Naive thymus-derived CD4-positive, alpha-beta T cell (primary cell): ENCODE measurements at regions of chr10 and their contacts with region 1.

Region 1: DNA sequence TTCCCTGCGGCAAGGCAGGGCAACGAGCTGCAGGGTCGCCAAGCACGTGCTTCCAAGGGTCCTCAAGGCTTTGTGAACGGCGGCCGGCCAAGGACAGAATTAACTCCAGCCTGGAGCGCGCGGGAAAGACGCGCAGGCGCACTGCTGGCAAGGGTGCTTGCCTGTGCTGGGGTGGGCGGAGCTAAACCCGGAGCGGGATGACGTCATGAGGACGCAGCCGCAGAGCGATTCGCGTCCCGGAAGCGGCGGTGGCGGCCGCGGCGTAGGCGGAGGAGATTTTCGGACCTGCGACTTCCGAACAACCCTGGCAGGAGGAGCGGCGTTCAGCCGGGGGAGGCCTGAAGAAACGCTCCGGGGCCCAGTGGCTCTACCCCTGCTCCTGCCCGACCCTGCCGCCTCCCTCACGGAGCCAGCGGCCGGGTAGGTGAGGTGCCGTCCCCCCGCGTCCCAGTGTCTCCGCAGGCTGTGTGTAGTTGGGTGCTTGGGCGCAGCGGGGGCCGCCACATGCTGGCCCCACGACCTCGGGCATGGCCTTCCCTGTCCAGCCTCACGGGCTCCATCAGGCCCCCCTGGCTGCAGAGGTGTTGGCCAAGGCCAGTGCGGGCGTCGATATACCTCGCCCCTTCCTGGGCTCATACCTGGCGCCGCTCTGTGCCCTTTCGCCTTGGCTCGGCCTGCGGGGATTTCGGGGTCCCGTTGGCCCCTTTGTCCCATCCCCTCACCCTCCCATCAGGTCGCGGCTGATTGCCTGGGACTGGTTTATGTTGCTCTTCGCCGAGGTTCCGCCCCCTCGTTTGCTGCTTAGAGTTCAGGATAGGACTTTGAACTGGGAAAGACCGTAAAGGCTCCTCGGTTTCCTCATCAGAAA is at the start of gene ZFYVE27:
- DNase-seq: peak; percentile 88 to 99 (median 94)
- ATAC-seq: peak; percentile 96
- H3K4me3 ChIP-seq: peak within 1 kb of the TSS; percentile 86
- H3K4me3 Mint-ChIP-seq: peak within 1 kb of the TSS; percentile 88 to 98 (median 94)
- H3K27ac ChIP-seq: peak within 1 kb of the TSS; percentile 99
- H3K27ac Mint-ChIP-seq: peak within 1 kb of the TSS; percentile 95 to 99 (median 97)
- H3K4me1 ChIP-seq: peaks cover 18% of the 10 kb centered on the region in 2 donors
- H3K4me1 Mint-ChIP-seq: peaks cover 20 to 62% (median 58%) of the 10 kb centered on the region in 7 donors
- H3K27me3 ChIP-seq: no peaks in the 10 kb centered on the region
- H3K27me3 Mint-ChIP-seq: peaks cover 0 to 3% (median 0%) of the 10 kb centered on the region in 5 donors
- total RNA-seq, gene ZFYVE27: 31.0 to 68.8 (median 61.8) TPM

Region 2: DNA sequence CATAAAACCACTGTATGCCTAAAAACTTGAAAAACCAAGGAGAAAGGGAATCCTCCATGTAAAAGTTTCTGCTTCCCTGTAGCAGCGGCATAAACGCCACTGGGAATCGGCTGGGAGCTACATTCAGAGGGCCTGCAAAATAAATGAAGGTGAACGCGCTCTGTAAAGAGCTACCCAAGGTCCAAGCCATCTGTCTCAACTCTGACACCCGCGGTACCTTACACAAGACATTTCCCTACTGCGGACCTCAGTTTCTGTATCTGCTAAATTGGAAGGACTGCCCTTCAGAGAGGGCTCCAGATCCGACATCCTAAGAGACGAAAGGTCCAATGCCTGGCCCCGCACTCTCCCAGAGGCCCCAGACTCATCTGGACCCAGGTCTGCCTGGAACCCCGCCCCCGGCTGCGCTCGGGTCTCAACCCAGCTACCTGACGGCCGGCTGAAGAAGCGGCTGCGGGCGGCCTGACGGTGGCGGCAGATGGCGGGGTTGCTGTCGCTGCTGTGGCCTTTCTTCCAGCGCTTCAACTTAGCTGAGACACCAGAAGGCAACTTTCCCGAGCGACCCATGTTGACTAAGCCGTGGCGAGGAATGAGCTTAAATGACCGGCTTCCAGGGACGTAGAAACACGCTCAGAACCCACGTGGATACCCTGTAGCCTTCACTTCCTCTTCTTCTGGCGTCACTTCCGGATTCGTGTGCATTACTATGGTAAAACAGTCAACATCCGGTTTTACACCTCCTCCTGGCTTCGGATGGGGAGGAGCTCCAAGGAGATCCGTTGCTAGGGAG is 336.3 kb before region 1 on chr10 and contains the start of gene RRP12:
- CTCF ChIA-PET with region 1: no interaction called
- POLR2A ChIA-PET with region 1: no interaction called
- intact Hi-C with region 1: loop called in 1 of 2 experiments (anchors 2 kb)
- DNase-seq: peak; percentile 47 to 96 (median 92)
- ATAC-seq: peak; percentile 96
- H3K4me3 ChIP-seq: peak within 1 kb of the TSS; percentile 73
- H3K4me3 Mint-ChIP-seq: peak within 1 kb of the TSS; percentile 90 to 97 (median 95)
- H3K27ac ChIP-seq: peak within 1 kb of the TSS; percentile 90
- H3K27ac Mint-ChIP-seq: peak within 1 kb of the TSS; percentile 81 to 99 (median 98)
- H3K4me1 ChIP-seq: peaks cover 13 to 15% of the 10 kb centered on the region in 2 donors
- H3K4me1 Mint-ChIP-seq: peaks cover 6 to 22% (median 17%) of the 10 kb centered on the region in 7 donors
- H3K27me3 ChIP-seq: no peaks in the 10 kb centered on the region
- H3K27me3 Mint-ChIP-seq: no peaks in the 10 kb centered on the region
- total RNA-seq, gene RRP12: 22.0 to 197 (median 32.3) TPM

Region 3: DNA sequence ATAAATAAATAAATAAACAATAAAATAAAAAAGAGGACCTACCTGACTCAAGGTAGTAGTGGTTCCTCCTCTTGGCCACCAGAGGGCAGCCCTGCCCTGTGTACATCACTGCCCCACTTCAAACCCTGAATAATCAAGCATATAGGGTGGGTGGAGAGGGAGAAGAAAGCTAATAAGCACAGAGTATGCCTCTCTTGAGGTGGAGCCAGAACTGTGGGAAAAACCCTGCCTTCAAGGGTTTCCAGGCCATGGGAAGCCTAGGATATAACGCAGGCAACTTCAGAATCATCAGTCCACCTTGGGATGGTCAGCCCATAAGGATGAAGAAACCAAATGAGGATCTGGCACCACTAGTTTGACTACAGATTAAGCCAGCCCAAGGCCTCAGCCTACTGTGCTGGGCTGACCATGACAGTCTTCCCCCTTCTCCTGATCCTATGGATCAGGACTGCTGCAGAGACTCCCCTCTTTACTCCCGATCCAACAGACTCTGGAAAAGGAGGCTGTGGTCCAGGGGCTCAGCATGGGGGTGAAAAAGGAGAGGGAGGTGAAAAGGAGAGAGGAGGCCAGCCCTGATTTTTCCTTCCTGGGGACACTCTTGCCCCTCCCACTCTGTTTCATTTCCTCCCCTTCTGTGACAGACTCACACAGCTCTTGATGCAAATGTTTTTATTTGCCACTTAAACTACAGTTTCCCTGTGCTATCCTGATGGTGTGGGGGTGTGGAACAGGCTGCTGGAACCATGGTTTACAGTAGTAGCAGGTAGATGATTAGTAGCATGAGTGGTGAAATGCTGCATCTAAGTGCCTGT is 60.2 kb before region 1 on chr10:
- CTCF ChIA-PET with region 1: interaction called, 90 read pairs
- POLR2A ChIA-PET with region 1: interaction called, 14 read pairs
- intact Hi-C with region 1: loop called in 1 of 2 experiments (anchors 1 kb)
- DNase-seq: peak; percentile 35 to 60 (median 48)
- ATAC-seq: peak; percentile 90
- H3K4me3 ChIP-seq: no peak overlapping the region
- H3K4me3 Mint-ChIP-seq: no peak overlapping the region
- H3K27ac ChIP-seq: no peak overlapping the region
- H3K27ac Mint-ChIP-seq: peak overlapping the region in 1 of 9 donors; percentile 13
- H3K4me1 ChIP-seq: no peaks in the 10 kb centered on the region
- H3K4me1 Mint-ChIP-seq: peaks cover 0 to 16% (median 0%) of the 10 kb centered on the region in 7 donors
- H3K27me3 ChIP-seq: no peaks in the 10 kb centered on the region
- H3K27me3 Mint-ChIP-seq: no peaks in the 10 kb centered on the region

Region 4: DNA sequence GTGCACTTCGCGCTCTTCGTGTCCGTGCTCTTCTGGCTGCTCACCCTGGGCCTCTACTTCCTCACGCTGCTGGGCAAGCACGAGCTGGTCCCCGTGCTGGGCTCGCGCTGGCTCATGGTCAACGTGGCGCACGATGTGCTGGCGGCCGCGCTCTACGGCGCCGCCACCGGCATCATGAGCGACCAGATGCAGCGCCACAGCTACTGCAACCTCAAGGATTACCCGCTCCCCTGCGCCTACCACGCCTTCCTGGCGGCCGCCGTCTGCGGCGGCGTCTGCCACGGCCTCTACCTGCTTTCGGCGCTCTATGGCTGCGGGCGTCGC is 23.1 kb before region 1 on chr10:
- CTCF ChIA-PET with region 1: interaction called, 58 read pairs
- POLR2A ChIA-PET with region 1: interaction called, 7 read pairs
- intact Hi-C with region 1: loop called (anchors 1 kb)
- DNase-seq: peak in 8 of 9 donors; percentile 28 to 67 (median 40)
- ATAC-seq: peak; percentile 83
- H3K4me3 ChIP-seq: peak overlapping the region; percentile 69
- H3K4me3 Mint-ChIP-seq: peak overlapping the region; percentile 95 to 100 (median 99)
- H3K27ac ChIP-seq: no peak overlapping the region
- H3K27ac Mint-ChIP-seq: peak overlapping the region in 7 of 9 donors; percentile 44 to 95 (median 80)
- H3K4me1 ChIP-seq: peaks cover 5 to 6% of the 10 kb centered on the region in 2 donors
- H3K4me1 Mint-ChIP-seq: peaks cover 5 to 21% (median 11%) of the 10 kb centered on the region in 7 donors
- H3K27me3 ChIP-seq: no peaks in the 10 kb centered on the region
- H3K27me3 Mint-ChIP-seq: peaks cover 14 to 43% (median 19%) of the 10 kb centered on the region in 5 donors

Region 5: GRCh38 chr10:97792141-97792721 is 55.1 kb after region 1 on chr10:
- CTCF ChIA-PET with region 1: interaction called, 3 read pairs
- POLR2A ChIA-PET with region 1: no interaction called
- intact Hi-C with region 1: loop called in 1 of 2 experiments (anchors 2 kb)
- DNase-seq: peak; percentile 42 to 79 (median 60)
- ATAC-seq: peak; percentile 82
- H3K4me3 ChIP-seq: no peak overlapping the region
- H3K4me3 Mint-ChIP-seq: peak overlapping the region in 2 of 10 donors; percentile 5 to 25
- H3K27ac ChIP-seq: no peak overlapping the region
- H3K27ac Mint-ChIP-seq: peak overlapping the region in 5 of 9 donors; percentile 14 to 69 (median 32)
- H3K4me1 ChIP-seq: peaks cover 23 to 39% of the 10 kb centered on the region in 2 donors
- H3K4me1 Mint-ChIP-seq: peaks cover 23 to 52% (median 35%) of the 10 kb centered on the region in 7 donors
- H3K27me3 ChIP-seq: no peaks in the 10 kb centered on the region
- H3K27me3 Mint-ChIP-seq: peaks cover 0 to 16% (median 0%) of the 10 kb centered on the region in 5 donors

Region 6: DNA sequence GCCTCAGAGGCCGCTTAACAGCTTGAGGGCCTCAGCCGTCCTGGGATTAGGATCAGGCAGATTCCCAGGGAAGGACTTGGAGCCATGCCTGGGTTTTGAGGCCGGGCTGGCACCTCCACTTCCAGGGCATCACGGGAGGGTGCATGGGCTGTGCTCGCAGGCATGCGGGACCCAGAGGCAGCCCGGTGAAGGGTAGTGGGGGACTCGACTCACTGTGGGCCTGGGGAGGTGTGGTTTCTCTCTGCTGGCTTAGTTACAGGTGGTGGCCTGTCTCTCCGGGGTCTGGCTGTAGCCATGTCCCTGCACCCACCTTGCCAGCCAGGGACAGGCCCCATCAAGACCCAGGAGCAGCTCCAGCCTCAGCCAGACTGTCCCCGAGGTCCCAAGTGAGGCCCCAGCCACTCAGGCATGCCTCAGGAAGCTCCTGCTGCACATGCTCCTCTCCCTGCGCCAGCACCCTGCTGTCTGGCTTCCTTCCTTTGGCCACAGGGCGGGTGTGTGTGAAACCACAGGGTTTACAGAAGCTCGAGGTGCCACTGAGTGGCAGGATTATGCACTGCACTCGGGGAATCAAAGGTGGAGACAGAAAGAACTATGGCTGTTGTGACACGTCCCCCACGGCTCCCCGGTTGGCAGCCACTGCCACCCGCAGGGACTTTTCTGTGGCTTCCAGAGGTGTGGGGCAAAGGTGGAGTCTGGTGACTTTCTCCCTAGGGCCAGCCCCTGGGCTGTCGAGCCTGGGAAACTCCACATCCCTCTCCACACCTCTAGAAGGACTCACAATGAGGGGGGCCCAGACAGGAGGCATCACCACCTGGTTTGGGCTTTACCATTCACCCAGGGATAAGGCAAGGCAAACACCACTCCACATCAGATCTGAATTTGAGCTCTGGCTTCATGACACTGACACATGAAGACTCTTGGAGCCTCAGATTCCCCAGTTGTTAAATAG is 132.2 kb after region 1 on chr10:
- CTCF ChIA-PET with region 1: interaction called, 3 read pairs
- POLR2A ChIA-PET with region 1: interaction called, 9 read pairs
- intact Hi-C with region 1: loop called in 1 of 2 experiments (anchors 1 kb)
- DNase-seq: peak; percentile 56 to 85 (median 78)
- ATAC-seq: peak; percentile 97
- H3K4me3 ChIP-seq: no peak overlapping the region
- H3K4me3 Mint-ChIP-seq: peak overlapping the region in 9 of 10 donors; percentile 6 to 59 (median 37)
- H3K27ac ChIP-seq: peak overlapping the region; percentile 41
- H3K27ac Mint-ChIP-seq: peak overlapping the region; percentile 38 to 85 (median 68)
- H3K4me1 ChIP-seq: peaks cover 8 to 12% of the 10 kb centered on the region in 2 donors
- H3K4me1 Mint-ChIP-seq: peaks cover 9 to 16% (median 13%) of the 10 kb centered on the region in 7 donors
- H3K27me3 ChIP-seq: no peaks in the 10 kb centered on the region
- H3K27me3 Mint-ChIP-seq: peaks cover 0 to 24% (median 0%) of the 10 kb centered on the region in 5 donors

Region 7: DNA sequence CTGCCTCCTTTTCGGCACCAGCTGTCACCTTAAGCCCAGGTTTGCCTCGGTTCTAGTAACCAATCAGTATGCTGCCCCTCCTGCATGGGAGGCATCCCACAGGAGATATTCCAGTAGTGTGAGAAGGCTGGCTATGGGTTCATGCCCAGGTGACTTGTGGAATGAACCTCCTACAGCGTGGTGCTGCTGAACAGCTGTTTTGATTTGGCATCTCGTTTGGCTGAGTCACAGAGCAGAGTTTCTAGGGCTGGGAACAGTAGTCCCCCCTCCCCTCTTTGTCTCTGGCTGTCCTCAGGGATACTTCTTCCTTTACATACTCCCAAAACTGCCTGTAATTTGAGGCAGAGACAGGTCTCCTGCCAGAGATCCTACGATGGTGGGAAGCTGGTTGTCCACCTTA is 413.4 kb after region 1 on chr10:
- CTCF ChIA-PET with region 1: no interaction called
- POLR2A ChIA-PET with region 1: no interaction called
- intact Hi-C with region 1: no loop called
- DNase-seq: no peak
- ATAC-seq: no peak
- H3K4me3 ChIP-seq: no peak overlapping the region
- H3K4me3 Mint-ChIP-seq: peak overlapping the region in 1 of 10 donors; percentile 15
- H3K27ac ChIP-seq: no peak overlapping the region
- H3K27ac Mint-ChIP-seq: peak overlapping the region in 1 of 9 donors; percentile 10
- H3K4me1 ChIP-seq: no peaks in the 10 kb centered on the region
- H3K4me1 Mint-ChIP-seq: peaks cover 6 to 61% (median 51%) of the 10 kb centered on the region in 7 donors
- H3K27me3 ChIP-seq: no peaks in the 10 kb centered on the region
- H3K27me3 Mint-ChIP-seq: no peaks in the 10 kb centered on the region